ENCODE measurements at regions of chr11 and their contacts with region 1.

Region 1: GRCh38 chr11:102553835-102554282 is 23.3 kb upstream of the MMP7 start:
- DNase-seq: no peak
- H3K4me3 Mint-ChIP-seq: no peak overlapping the region
- H3K27ac Mint-ChIP-seq: no peak overlapping the region
- H3K4me1 Mint-ChIP-seq: no peaks in the 10 kb centered on the region
- H3K27me3 Mint-ChIP-seq: no peaks in the 10 kb centered on the region

Region 2: GRCh38 chr11:102527701-102528100 is 26.2 kb before region 1 on chr11:
- CTCF ChIA-PET with region 1: no interaction called
- intact Hi-C with region 1: loop called (anchors 2 kb)
- DNase-seq: no peak
- H3K4me3 Mint-ChIP-seq: no peak overlapping the region
- H3K27ac Mint-ChIP-seq: no peak overlapping the region
- H3K4me1 Mint-ChIP-seq: peaks cover 7% of the 10 kb centered on the region
- H3K27me3 Mint-ChIP-seq: no peaks in the 10 kb centered on the region

Region 3: DNA sequence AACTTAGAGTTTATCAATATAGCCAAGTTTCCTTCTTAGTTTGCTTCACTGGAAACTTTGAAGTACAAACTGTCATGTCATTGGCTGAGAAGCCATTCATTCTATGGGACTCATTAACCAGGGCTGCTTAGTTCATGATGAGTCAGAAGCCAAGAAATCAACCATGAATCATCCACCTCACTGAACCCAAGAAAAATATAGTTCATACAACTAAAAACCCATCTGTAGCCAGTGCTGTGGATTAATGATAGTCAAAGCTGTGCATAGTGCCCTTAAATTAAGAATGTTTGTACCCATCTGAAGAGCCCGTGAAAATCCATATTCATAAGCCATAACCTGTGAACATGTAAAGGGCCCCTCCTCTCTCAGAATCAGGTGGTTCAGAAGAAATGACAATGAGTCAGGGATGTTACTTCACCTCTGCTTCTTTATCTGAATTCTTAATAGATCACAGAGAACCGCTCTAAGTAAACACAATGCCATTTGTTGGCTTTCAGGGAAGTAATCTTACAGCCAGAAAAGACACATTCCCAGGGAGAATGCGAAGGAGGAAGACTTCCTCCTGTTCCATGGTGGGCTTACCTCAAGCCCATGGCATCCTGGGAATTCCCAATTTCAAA is 45.9 kb after region 1 on chr11:
- CTCF ChIA-PET with region 1: no interaction called
- intact Hi-C with region 1: no loop called
- DNase-seq: peak; percentile 43
- H3K4me3 Mint-ChIP-seq: no peak overlapping the region
- H3K27ac Mint-ChIP-seq: peak overlapping the region; percentile 75
- H3K4me1 Mint-ChIP-seq: peaks cover 27% of the 10 kb centered on the region
- H3K27me3 Mint-ChIP-seq: no peaks in the 10 kb centered on the region